ENCODE measurements at regions of chr11 and their contacts with region 1.

Region 1: DNA sequence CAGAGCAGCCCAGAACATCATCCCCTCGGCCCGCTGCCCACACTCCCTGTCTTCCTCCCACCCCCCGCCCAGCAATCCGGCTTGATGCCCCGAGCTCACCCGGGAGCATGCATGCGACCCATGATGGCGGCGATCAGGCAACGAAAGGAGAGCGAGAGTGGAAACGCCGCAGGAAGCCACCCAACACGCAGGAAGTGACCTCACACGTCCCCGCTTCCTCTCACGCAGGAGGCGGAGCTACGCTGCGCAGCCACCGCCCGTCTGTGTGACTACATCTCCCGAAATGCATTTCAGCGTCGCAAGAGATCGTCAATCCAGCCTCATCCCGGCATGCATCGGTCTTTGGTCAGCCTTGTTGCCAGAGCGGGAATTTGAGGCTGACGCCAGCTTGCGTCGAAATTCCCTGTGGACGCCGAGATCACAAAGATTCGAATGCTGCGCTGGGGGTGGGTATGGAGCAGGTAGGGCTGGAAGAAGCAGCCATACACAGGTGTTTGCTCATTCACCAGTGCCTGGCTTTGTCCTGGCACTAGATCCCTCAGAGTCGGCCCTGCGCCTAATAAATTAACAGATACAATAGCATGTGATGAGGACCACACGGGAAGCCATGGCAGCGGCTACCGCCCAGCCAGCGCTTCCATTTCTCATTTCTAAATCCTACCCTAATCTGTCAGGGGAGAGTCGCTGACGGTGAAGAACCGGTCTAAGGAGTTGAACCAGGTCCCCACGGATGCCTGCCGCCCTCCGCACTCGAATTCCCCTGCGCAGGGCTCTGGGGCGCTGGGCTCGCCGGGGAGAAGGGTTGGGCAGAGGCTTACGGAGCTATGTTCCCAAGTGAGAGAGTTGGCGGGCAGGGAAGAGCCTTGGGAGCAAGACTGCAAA is at the start of gene RPS13:
- DNase-seq: peak; percentile 97
- H3K4me3 ChIP-seq: peak within 1 kb of the TSS; percentile 59 to 83 (median 82)
- H3K27ac ChIP-seq: peak within 1 kb of the TSS; percentile 64 to 95 (median 85)
- H3K4me1 ChIP-seq: peaks cover 19 to 21% of the 10 kb centered on the region in 2 donors
- H3K27me3 ChIP-seq: no peaks in the 10 kb centered on the region
- CTCF ChIP-seq: no peak
- POLR2A ChIP-seq: peak in 1 of 2 donors; percentile 88
- total RNA-seq, gene RPS13: 543 to 1,614 (median 1,223) TPM

Region 2: GRCh38 chr11:16554361-16554760 is 523.4 kb before region 1 on chr11:
- intact Hi-C with region 1: no loop called
- DNase-seq: no peak
- H3K4me3 ChIP-seq: no peak overlapping the region
- H3K27ac ChIP-seq: no peak overlapping the region
- H3K4me1 ChIP-seq: peaks cover 0 to 5% of the 10 kb centered on the region in 2 donors
- H3K27me3 ChIP-seq: no peaks in the 10 kb centered on the region
- CTCF ChIP-seq: no peak
- POLR2A ChIP-seq: no peak

Region 3: DNA sequence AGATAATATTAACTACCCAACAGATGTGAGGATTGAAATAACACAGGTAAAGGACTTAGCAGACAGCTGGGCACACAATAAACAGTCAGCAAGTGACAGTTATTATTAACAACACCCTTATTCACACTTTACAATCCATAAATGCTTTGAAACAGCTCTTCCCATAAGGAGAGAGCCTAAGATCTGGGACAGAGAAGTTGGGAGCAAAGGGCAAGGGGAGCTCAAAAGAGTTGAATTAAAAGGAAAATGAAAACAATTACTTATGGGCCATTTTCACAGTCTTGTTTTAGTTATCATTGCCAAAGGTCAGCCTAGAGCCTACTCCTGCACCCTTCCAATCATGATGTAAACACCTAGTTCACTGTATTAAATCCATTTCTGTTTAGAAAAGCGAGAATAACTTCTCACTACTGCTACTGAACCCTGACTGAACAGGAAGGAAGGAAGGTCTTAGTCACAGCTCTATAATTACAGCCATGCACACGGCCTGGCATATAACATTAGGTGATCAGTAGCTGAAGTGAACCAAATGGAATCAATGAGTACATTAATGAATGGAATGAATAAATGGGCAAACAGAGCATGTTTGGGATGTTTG is 174.9 kb before region 1 on chr11:
- intact Hi-C with region 1: no loop called
- DNase-seq: no peak
- H3K4me3 ChIP-seq: no peak overlapping the region
- H3K27ac ChIP-seq: no peak overlapping the region
- H3K4me1 ChIP-seq: peaks cover 12 to 24% of the 10 kb centered on the region in 2 donors
- H3K27me3 ChIP-seq: no peaks in the 10 kb centered on the region
- CTCF ChIP-seq: no peak
- POLR2A ChIP-seq: no peak

Region 4: DNA sequence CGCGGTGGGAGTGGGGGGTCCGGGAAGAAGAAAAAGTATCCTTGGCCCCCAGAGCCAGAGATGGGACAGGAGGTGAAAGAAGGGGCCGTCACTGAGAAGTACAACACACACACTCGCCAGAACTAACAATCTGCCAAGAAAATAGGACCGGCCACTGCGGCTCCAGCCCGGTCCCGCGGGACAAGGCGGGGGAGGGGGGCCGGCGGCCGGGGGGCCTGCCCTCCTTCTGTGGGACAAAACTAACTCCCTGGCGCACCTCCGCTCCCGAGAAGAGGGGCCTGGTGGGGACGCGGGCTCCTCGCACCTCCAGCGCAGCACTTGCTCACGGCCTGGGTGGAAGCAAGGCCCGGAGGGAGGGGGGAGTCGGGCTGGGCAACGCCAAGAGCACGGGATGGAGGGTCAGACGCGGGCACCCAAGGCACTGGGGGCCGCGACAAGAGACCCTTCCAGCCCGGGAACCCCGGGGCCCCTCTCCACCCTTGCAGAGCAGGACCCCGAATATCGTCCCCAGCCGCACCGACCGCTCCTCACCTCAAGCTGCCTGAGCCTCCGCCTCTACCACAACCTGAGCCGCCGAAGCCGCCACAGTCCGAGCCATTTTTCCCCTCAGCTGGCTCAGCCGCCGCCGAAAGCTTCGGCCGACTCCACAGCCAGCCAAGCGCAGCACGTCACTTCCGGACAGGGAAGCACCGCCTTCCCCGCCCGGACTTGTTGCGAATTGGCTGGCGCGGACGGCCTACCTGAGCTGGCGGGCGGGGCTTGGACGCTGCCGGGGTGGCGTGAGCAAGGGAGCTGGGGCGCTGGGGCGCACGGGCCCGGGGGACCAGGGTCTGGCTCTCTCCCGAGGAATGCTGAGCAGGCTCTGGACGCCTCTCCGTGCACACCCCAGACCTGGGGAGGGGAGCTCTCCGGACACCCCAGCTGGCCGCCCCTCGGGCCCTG is 129.8 kb after region 1 on chr11 and contains the start of gene PIK3C2A:
- intact Hi-C with region 1: loop called (anchors 5 kb)
- DNase-seq: peak; percentile 99
- H3K4me3 ChIP-seq: peak within 1 kb of the TSS; percentile 11 to 90 (median 75)
- H3K27ac ChIP-seq: peak within 1 kb of the TSS; percentile 95 to 98 (median 98)
- H3K4me1 ChIP-seq: peaks cover 19 to 21% of the 10 kb centered on the region in 2 donors
- H3K27me3 ChIP-seq: no peaks in the 10 kb centered on the region
- CTCF ChIP-seq: no peak
- POLR2A ChIP-seq: peak; percentile 92 to 99
- total RNA-seq, gene PIK3C2A: 94.0 to 207 (median 132) TPM